Mammary epithelial cell (primary cell): ENCODE measurements at regions of chr16 and their contacts with region 1.

Region 1: DNA sequence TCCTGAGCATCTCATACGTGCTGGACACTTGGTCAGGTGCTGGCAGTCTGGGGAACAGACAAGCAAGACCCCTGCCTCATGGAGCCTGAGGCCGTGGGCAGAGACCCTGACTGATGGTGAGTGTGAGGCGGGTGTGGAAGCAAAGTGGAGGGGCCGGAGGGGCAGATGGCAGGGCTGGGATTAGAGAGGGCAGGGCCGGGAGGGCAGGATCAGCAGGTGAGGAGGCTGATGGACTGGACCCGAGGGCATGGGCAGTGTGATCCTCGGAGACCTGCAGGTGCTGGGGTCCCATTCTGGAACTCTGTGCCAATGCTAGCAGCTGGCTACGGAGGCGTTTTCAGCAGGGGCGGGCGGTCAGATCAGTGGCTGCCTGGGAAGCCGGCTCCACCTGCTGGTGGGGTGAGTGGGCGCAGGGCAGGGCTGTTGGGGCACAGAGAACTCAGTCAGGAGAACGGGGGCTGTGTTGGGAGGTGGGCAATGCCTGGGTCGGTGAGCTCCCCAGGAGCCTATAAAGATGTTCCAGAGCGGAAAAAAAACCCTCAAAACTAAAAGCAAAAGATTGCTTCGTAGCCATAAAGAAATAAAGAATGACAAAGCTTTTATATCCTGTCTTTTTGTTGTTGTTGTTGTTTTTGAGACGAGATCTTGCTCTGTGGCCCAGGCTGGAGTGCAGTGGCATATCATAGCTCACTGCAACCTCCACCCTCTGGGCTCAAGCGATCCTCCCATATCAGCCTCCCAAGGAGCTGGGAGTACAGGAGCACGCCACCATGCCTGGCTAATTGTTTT is 8.9 kb upstream of the C16orf74 start:
- DNase-seq: peak; percentile 29
- H3K4me3 ChIP-seq: no peak overlapping the region
- H3K27ac ChIP-seq: no peak overlapping the region
- H3K4me1 ChIP-seq: peaks cover 17% of the 10 kb centered on the region
- H3K27me3 ChIP-seq: no peaks in the 10 kb centered on the region
- CTCF ChIP-seq: peak; percentile 59 to 90

Region 2: GRCh38 chr16:85437166-85438055 is 322.4 kb before region 1 on chr16:
- CTCF ChIA-PET with region 1: no interaction called
- dilution Hi-C with region 1: no loop called
- in situ Hi-C with region 1: no loop called
- intact Hi-C with region 1: no loop called
- DNase-seq: no peak
- H3K4me3 ChIP-seq: no peak overlapping the region
- H3K27ac ChIP-seq: no peak overlapping the region
- H3K4me1 ChIP-seq: no peaks in the 10 kb centered on the region
- H3K27me3 ChIP-seq: no peaks in the 10 kb centered on the region
- CTCF ChIP-seq: no peak

Region 3: DNA sequence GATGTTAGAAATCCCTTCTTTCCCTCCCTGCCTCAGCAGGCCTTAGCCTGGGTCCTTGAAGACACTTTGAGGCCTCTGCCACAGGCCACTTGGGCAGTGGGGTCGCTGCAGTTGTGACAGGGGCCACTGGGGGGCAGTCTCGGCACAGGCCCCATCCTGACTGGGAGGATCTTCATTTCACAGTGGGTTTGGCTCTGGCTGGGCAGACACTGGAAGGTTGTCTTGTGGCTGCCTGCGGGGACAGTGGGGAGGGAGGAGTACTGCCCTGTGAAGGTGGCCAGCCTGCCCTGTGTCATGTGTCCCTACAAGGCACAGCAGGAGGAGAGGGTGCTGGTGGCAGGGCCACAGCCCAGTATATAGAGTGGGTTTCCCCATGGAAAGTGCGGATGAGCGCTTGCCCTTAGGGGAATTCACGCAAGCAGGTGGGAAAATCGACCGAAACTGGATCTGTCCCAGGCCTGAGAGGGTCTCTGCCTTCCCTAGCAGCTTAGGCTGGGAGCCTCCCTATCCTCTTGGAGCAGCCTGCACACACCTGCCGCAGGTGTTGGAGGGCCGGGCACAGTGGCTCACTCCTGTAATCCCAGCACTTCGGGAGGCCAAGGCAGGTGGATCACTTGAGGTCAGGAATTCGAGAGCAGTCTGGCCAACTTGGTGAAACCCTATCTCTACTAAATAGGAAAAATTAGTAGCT is 99.9 kb before region 1 on chr16:
- CTCF ChIA-PET with region 1: no interaction called
- dilution Hi-C with region 1: loop called (anchors 5 kb)
- in situ Hi-C with region 1: no loop called
- intact Hi-C with region 1: loop called (anchors 1 kb)
- DNase-seq: peak; percentile 36
- H3K4me3 ChIP-seq: no peak overlapping the region
- H3K27ac ChIP-seq: no peak overlapping the region
- H3K4me1 ChIP-seq: no peaks in the 10 kb centered on the region
- H3K27me3 ChIP-seq: no peaks in the 10 kb centered on the region
- CTCF ChIP-seq: peak; percentile 87 to 93

Region 4: DNA sequence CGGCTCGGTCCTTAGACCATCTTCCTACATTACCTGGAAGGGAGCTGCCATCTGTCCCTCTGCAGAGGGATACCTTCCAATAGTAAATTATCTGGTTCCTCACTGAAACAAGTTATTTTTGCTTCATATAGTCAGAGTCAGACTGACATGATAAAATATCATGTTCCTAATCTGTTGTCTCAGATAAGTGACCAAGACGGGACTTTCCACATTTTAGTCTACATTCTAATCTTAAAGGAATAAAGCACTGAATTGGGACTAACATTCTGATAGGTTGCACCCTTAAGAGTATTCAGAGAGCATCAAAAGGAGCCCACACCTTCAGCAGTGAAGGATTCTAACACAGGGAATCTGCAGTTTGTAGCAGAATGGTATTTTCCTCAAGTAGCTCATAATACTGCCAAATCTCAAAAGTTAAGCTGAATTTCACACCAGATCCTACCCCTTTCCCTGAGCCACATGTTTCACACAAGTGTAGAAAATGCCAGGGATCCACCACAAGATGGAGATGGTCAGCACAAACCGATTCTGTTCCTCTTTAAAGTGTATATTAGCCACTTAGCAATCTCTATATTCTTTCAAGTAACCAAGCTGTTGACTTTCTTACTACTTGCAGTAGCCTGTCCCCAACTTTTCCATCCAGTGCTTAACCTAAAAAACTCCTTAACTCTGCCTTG is 84.4 kb before region 1 on chr16:
- CTCF ChIA-PET with region 1: no interaction called
- dilution Hi-C with region 1: no loop called
- in situ Hi-C with region 1: loop called in 1 of 2 experiments (anchors 10 kb)
- intact Hi-C with region 1: loop called (anchors 1 kb)
- DNase-seq: no peak
- H3K4me3 ChIP-seq: no peak overlapping the region
- H3K27ac ChIP-seq: no peak overlapping the region
- H3K4me1 ChIP-seq: peaks cover 2% of the 10 kb centered on the region
- H3K27me3 ChIP-seq: no peaks in the 10 kb centered on the region
- CTCF ChIP-seq: peak; percentile 52 to 56